Spleen (tissue), 13 donors: ENCODE measurements at regions of chr5 and their contacts with region 1.

Region 1: DNA sequence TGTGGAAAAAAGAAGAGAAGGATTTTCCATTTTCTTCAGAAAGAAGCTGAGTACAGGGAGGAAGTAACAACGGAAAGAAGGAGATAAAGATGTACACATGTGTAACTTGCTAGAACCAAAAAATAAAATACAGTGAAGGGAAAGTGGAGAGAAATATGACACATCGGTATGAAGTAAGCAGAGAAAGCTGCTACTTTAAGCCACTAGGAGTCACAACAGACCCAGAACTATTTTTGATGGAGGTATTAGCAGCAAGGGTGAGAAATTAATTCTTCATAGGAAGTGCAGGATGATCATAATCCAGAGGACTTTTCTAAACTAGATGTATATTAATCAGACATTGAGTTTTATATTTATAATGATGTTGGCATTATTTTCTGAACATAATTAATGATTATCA is 88.5 kb downstream of the FAM174A start:
- DNase-seq: no peak
- H3K4me3 ChIP-seq: no peak overlapping the region
- H3K27ac ChIP-seq: no peak overlapping the region
- H3K4me1 ChIP-seq: peaks cover 0 to 4% (median 0%) of the 10 kb centered on the region in 6 donors
- H3K27me3 ChIP-seq: no peaks in the 10 kb centered on the region
- CTCF ChIP-seq: peak; percentile 14 to 66 (median 56)
- POLR2A ChIP-seq: no peak

Region 2: DNA sequence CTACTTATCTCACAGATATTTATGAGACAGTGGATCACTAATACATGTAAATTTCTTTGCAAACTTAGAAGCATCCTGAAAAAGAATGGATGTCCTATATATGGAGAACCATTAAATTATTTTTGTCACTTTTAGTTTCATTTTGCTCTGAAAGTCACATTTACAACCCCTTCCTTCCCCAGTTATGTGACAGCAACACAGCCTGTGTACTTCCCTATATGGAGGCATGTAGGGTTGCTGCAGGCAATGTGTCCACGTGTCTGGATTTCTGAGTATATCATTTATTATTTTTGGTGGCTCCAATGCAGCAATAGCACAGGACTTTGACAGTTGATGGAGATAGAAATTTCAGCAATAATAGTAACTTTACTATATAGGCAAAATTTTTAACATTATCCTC is 123.0 kb after region 1 on chr5:
- intact Hi-C with region 1: no loop called
- DNase-seq: no peak
- H3K4me3 ChIP-seq: peak overlapping the region in 1 of 8 donors; percentile 17
- H3K27ac ChIP-seq: peak overlapping the region in 2 of 8 donors; percentile 42 to 52
- H3K4me1 ChIP-seq: peaks cover 0 to 13% (median 8%) of the 10 kb centered on the region in 6 donors
- H3K27me3 ChIP-seq: no peaks in the 10 kb centered on the region
- CTCF ChIP-seq: no peak
- POLR2A ChIP-seq: no peak

Region 3: DNA sequence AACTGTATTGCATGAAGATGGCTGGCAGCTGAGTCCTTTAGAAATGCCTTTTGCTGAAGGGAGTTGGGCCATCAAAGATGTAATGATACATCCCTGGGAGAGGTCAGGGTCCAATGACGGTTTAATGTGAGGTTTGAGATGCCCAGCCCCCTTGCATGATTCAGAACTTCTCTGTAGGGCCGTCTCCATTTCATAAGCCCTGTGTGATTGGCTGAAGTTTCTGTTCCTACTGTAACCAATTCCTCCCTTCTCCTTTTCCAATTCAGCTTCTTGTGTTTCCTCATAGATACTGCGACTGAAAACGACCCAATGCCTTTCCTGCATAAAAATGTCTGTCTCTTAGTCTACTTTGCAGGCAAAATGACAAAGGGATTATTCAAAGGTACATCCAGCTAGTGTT is 327.3 kb after region 1 on chr5:
- intact Hi-C with region 1: no loop called
- DNase-seq: no peak
- H3K4me3 ChIP-seq: no peak overlapping the region
- H3K27ac ChIP-seq: no peak overlapping the region
- H3K4me1 ChIP-seq: no peaks in the 10 kb centered on the region
- H3K27me3 ChIP-seq: no peaks in the 10 kb centered on the region
- CTCF ChIP-seq: no peak
- POLR2A ChIP-seq: no peak

Region 4: GRCh38 chr5:101045689-101046088 is 422.0 kb after region 1 on chr5:
- intact Hi-C with region 1: loop called (anchors 5 kb)
- DNase-seq: no peak
- H3K4me3 ChIP-seq: no peak overlapping the region
- H3K27ac ChIP-seq: no peak overlapping the region
- H3K4me1 ChIP-seq: no peaks in the 10 kb centered on the region
- H3K27me3 ChIP-seq: no peaks in the 10 kb centered on the region
- CTCF ChIP-seq: peak in 7 of 11 experiments; percentile 12 to 43 (median 29)
- POLR2A ChIP-seq: no peak